PC-9 (cell line): ENCODE measurements at regions of chr10 and their contacts with region 1.

Region 1: DNA sequence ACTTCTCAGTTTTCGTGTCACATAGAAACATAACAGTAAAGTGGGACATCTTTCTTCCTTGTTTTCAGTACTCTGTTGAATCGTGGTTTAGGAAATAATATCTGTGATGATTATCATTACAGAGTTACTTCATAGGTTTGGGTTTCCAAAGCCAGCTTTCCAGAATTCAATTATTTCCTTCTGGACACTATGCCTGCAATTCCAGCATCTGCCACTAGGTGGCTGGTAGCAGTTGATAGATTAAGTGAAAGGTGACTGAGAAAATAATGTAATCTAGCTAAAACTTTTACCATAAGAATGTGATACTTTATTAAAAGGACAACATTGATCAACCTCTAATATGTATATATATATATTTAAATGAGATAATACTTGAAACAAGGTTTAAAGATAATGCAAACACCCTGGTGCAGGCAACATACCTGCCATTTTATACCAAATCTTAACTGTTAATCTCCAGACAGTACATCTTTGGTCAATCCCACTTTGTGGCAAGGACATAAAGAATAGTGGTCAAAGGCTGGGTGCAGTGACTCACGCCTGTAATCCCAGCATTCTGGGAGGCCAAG is 102.6 kb downstream of the SH3PXD2A start:
- DNase-seq: no peak
- H3K4me3 ChIP-seq: no peak overlapping the region
- H3K27ac ChIP-seq: no peak overlapping the region
- H3K4me1 ChIP-seq: peaks cover 26% of the 10 kb centered on the region
- H3K27me3 ChIP-seq: no peaks in the 10 kb centered on the region
- CTCF ChIP-seq: peak; percentile 93

Region 2: GRCh38 chr10:103772096-103772845 is 19.5 kb after region 1 on chr10:
- CTCF ChIA-PET with region 1: no interaction called
- POLR2A ChIA-PET with region 1: no interaction called
- intact Hi-C with region 1: no loop called
- DNase-seq: peak in 1 of 2 experiments; percentile 50
- H3K4me3 ChIP-seq: no peak overlapping the region
- H3K27ac ChIP-seq: no peak overlapping the region
- H3K4me1 ChIP-seq: no peaks in the 10 kb centered on the region
- H3K27me3 ChIP-seq: no peaks in the 10 kb centered on the region
- CTCF ChIP-seq: no peak

Region 3: DNA sequence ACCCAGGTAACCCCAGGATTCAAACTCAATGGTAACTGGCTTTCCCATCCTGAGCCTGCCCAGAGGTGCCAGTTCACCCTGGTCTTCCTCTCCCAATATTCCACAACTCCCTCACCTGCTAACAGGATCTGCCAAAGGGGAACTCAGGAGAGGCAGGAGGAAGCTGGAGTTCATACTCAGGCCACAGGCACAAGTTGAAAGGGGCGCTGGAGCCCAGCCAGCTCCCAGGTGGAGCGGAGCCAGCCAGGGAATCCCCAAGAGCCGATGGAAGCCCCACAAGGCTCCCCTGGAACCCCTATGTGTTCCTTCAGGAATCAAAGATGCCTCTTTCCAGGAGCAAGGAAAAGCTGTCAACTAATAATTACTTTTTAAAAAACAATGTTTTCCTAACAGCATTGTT is 39.1 kb after region 1 on chr10:
- CTCF ChIA-PET with region 1: no interaction called
- POLR2A ChIA-PET with region 1: interaction called, 15 read pairs
- intact Hi-C with region 1: no loop called
- DNase-seq: no peak
- H3K4me3 ChIP-seq: no peak overlapping the region
- H3K27ac ChIP-seq: no peak overlapping the region
- H3K4me1 ChIP-seq: peaks cover 39% of the 10 kb centered on the region
- H3K27me3 ChIP-seq: no peaks in the 10 kb centered on the region
- CTCF ChIP-seq: no peak